Sciatic nerve (tissue), 2 donors: ENCODE measurements at regions of chr11 and their contacts with region 1.

Region 1: DNA sequence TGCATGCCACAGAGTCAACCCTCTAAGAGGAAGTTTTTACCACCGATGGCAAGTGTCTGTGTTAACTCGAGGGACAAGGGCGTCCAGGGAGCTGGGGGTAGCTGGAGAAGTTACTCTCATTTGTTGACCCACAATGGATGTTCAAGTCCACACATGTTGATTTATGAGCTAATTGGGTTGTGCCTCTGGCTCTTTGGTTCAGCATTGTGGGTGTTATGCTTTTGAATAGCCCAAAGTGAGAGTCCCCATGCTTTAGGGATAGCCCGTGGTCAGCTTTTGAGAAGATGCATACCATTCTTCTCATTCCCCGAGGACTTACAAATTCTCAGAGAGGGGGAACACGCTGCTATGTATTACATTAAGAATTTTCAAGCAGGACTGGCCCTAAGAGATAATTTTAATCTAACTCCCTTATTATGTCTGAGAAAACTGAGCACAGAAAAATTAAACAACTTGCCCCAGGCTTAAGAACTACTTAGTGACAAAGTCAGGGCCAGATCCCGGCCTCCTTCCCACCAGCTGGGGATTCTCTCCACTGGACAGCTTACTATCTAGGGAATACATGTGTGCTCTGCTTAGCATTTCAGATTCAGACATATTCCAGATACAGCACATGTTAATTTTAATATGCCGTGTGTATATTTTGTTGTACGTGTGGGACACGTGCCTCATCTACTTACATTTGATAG is 5.2 kb upstream of the PLET1 start:
- DNase-seq: no peak
- ATAC-seq: no peak

Region 2: DNA sequence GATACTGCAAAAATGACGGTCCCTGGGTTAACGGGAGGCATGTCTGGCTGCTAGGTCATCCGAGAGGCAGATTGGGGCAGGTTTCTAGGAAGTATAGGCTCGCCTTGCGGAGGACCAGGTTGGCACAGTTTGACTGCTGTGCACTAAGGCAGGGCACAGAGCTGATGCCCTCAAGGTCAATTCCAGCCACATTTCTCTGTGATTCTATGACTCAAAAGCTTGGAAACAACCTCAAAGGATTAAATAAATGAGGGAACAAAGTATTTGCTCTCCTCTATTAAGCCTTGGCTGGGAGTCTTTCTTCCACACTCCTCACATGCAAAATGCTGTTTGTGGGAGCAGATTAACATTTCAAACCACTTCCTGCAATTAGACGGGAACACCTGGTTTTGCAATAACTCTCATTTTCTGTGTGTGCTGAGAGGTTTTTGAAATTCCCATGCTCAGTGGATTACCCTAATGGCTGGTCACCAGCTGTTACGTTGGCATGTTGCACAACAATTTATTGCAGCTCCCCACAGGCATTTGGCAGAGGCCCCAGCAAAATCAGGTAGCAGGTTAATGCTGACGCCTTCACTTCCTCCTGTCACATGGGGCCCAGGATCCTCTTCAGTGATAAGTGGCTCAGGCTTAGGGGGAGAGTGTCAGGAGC is 55.8 kb after region 1 on chr11:
- intact Hi-C with region 1: loop called (anchors 2 kb)
- DNase-seq: no peak
- ATAC-seq: peak; percentile 39

Region 3: DNA sequence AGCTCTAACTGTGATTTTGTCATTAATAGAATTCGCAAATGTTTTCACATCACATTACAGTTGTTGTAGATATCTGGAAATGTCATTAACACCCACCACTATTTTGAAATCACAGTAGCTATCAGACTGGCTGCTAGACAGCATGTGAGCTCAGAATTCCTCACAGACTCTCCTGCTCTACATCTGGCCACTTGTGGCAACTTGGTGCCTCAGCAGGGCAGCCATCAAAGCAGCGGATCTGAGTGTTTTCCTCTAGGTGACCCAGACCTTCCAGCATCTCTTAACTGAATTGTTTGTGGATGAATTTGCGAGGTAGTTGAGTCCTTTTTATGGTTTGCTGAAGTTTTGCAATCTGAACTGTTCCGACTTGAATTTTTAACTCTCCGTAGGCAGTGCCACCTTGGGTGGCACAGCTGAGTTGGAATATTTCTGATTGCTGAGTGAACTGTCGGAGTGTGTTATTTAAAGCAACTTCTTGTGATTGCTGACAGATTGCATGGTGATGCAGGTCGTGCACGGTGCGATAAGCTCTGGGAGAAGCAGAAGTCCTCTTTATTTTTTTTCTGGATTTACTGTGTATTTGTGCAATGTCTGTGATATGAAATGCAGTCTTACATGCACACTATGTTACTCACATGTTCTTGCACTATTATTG is 108.7 kb after region 1 on chr11:
- intact Hi-C with region 1: no loop called
- DNase-seq: no peak
- ATAC-seq: no peak